ENCODE measurements at regions of chr5 and their contacts with region 1.

Region 1: DNA sequence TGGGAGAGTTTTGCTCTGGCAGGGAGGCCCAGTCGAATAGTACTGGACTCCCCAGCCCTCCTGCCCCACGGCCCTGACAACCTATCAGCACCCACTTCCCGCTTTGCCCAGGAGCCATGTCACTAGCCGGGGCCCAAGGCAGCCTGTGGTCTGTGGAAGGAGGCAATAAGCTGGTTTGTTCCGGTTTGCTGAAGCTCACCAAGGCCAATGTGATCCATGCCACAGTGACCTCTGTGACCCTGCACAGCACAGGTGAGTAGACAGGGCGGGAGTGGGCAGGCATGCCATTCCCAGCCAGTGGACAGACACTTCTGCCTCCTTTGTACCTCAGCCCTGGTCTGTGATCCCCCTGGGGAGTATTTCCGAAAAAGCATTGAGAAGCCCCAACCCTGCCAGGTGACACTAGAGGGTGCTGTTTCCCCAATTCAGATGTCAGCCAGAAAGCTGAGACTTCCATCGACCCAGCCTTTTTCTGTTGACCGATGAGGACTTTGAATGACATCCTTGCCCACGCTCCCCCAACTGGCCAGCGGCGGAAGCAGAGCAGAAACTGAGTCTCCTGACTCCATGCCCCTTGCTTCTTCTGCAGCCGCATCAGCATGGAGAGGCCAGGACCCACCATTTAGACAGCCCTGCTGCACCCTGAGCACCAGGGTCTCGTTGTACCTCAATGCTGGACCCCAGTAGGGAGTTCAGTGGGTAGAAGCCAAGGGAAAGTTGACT is 9.6 kb downstream of the PCYOX1L start:
- DNase-seq: no peak

Region 2: DNA sequence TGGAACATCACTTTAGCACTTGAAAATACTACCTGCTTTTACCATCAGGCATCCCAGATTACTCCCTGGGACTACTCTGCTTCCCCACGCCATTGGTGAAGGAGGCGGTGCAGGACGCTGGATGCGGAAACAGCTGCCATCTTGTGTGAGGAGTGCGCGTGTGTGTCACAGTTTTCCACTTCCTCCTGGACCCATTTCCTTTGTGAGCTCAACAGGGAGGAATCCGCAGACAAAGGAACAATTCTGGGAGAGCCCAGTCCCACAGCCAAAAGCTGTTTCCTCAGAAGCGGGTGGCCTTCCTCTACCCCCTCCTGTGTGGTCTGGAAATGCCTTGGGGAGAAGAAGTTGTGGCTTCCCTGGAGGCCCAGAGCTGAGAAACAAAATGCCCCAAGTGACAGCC is 79.0 kb before region 1 on chr5:
- intact Hi-C with region 1: no loop called
- DNase-seq: no peak

Region 3: DNA sequence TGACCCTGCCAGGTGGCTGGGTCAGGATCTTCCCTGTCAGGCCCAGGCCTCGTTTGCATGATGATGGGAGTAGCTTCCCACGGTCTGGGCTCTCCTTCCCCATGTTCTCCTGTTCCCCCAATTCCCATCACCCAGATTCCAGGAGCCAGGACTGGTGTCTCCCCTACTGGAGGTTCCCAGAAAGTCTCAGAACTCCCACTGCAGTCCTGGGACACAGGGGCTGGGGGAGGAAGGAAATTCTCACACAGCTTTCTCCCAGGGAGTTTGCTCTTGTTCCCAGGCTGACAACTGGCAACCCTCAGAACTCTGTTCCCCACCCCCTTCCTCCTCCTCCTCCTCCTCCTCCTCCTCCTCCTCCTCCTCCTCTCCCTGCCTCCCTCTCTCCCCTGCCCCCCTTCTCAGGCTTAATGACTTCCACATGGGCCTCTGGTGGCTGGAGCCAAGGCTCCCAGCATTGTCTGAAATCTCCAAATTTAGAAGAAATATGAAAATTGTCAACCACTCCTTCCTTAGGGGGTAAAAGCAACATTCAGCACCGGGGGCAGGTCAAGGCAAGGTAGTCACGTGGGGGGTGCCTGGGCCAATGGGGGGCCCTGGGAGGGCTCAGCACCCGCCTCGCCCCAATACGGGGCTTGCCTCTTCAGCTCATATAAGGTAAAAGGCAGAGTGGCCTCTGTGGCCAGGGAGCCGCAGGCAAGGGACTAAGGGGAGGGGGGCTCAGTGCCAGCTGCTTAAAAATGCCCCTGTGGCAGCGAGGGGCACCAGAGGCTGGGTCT is 39.0 kb after region 1 on chr5:
- intact Hi-C with region 1: loop called in 1 of 2 experiments (anchors 5 kb)
- DNase-seq: peak; percentile 93

Region 4: DNA sequence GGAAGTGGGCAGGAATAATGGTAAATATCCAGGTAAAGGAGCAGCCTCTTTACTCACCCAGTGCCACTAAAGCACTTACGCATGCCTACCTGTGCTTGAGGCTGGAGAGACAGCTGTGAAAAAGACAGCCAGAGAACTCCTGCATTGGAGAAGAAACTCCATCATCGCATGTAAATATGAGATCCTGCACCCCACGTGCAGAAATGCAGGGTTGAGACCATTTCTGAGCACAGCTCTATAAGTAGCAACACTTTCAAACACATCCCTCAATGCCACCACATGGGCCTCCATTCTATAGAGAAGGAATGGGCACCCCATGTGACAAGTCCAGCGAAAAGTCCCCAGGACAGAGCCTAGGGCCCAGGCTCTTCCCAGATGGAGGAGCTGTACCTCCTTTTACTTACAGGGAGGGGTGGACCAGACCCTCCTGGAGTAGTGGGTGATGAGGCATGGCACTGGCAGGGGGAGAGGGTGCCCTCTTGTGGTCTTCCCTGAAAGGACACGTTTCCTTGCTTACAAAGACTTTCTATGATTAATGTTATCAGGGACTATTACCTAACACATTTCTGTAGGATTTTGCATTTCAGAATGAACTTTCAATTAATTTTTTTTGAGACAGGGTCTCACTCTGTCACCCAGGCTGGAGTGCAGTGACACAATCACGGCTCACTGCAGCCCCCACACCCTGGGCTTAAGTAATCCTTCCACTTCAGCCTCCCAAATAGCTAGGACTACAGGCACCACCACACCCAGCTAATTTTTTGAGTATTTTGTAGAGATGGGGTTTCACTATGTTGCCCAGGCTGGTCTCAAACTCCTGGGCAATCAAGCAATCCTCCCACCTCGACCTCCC is 67.0 kb after region 1 on chr5:
- intact Hi-C with region 1: loop called in 1 of 2 experiments (anchors 5 kb)
- DNase-seq: no peak

Region 5: GRCh38 chr5:149442563-149443182 is 75.3 kb after region 1 on chr5:
- intact Hi-C with region 1: loop called in 1 of 2 experiments (anchors 5 kb)
- DNase-seq: peak; percentile 95

Region 6: DNA sequence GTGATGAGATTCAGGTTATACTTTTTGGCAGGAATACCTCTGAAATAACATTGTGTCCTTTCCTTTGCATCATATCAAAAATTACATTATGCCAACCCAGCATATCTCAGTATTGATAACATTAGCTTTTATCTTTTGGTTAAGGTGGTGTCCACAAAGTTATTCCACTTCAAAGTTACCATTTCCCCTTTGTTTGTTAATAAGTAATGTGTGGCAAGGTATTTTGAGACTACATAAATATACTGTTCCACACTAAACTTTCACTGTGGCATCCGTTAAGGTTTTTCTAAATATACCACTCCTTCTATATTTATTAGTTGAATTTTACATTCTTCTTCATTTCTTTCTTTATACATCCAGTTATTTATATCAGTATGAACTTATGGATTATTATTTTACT is 199.8 kb after region 1 on chr5:
- intact Hi-C with region 1: loop called in 1 of 2 experiments (anchors 5 kb)
- DNase-seq: no peak

Measured in posterior vena cava (tissue), 2 donors.